ENCODE measurements at regions of chr4 and their contacts with region 1.

Region 1: DNA sequence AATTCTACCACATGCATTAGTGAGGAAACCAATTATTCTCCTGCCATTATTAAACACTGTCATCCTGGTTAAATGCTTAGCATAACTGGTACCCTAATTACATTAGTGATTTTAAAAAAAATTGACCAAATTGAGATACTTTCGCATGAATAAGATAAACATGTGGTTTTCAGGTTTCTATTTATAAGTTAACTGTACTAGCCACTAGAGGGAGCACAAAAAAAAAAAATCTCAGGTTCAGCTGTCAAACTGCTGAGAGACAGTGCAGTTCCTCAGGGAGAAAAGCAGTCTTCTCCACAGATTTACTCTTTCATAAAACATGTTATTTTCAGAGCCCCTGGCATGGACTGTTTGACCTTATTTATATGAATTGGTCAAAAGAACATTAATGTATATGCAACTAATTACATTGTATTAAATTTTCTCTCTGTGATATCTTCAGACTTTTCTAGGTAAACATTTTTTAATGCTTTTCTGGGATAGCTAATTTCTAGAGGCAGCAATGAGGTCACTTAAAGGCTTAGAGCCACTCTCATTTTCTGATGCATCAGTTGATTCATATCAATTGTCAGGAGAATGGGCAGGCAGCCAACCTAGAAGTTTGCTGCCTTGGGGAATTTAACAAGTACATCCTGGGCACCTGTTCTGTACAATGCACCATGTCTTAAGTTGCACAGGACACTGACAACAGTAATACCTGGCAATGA is 167.5 kb downstream of the CDS1 start:
- DNase-seq: peak; percentile 3
- H3K4me3 ChIP-seq: no peak overlapping the region
- CTCF ChIP-seq: peak; percentile 33

Region 2: GRCh38 chr4:84503495-84504437 is 246.6 kb before region 1 on chr4:
- CTCF ChIA-PET with region 1: no interaction called
- POLR2A ChIA-PET with region 1: no interaction called
- DNase-seq: peak; percentile 10
- H3K4me3 ChIP-seq: no peak overlapping the region
- CTCF ChIP-seq: peak; percentile 69

Region 3: DNA sequence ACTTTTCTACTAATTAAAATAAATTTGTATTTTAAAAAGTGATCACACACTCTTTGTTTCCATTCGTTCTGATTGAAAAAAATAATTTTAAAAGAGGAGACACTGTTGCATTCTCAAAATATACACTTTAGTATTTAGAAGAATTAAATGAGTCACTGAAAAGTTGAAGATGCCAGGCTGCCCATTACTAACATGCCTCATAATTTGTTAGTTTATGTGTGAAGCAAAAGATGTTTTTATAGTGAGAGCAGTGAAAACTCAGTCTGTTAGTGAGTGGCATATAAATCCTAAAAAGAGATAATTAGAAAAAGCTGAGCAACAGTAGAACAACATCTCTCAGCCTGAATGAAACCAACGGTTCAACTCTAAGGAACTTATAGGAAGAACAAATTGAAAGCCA is 24.1 kb before region 1 on chr4:
- CTCF ChIA-PET with region 1: interaction called, 20 read pairs
- POLR2A ChIA-PET with region 1: no interaction called
- DNase-seq: no peak
- H3K4me3 ChIP-seq: no peak overlapping the region
- CTCF ChIP-seq: no peak

Region 4: GRCh38 chr4:84733343-84734033 is 16.9 kb before region 1 on chr4:
- CTCF ChIA-PET with region 1: interaction called, 41 read pairs
- POLR2A ChIA-PET with region 1: no interaction called
- DNase-seq: no peak
- H3K4me3 ChIP-seq: no peak overlapping the region
- CTCF ChIP-seq: no peak

Region 5: DNA sequence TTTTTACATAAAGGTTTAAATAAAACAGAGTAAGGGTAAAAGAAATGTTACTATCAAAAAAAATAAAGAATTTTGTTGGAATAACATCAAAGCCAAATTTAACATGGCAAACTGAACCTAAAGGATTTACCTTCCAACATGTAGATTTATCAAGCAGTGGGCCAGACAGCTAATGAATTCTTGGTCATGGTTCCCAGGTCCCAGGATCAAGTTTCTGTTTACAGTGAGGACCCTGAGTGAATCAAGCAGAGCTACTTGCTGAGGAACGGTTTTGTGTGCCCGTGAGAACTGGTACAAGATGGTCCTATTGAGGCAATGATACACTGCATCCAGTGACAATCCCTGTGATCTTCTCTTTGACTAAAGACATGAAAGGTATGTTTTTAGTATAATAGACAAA is 10.3 kb before region 1 on chr4:
- CTCF ChIA-PET with region 1: interaction called, 41 read pairs
- POLR2A ChIA-PET with region 1: no interaction called
- DNase-seq: no peak
- H3K4me3 ChIP-seq: no peak overlapping the region
- CTCF ChIP-seq: no peak

Region 6: DNA sequence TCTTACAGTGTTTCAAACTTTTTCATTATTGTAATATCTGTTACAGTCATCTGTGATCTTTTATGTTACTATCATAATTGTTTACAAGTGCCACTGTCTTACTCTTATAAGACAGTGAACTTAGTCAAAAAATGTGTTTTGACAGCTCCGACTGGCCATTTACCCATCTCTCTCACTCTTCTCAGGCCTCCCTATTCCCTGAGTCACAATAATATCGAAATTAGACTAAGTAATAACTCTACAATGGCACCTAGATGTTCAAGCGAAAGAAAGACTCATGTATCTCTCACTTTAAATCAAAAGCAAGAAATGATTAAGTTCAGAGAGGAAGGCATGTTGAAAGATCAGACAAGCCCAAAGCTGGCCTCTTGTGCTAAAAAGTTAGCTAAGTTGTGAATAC is 16.8 kb after region 1 on chr4:
- CTCF ChIA-PET with region 1: interaction called, 28 read pairs
- POLR2A ChIA-PET with region 1: no interaction called
- DNase-seq: no peak
- H3K4me3 ChIP-seq: no peak overlapping the region
- CTCF ChIP-seq: no peak

Region 7: DNA sequence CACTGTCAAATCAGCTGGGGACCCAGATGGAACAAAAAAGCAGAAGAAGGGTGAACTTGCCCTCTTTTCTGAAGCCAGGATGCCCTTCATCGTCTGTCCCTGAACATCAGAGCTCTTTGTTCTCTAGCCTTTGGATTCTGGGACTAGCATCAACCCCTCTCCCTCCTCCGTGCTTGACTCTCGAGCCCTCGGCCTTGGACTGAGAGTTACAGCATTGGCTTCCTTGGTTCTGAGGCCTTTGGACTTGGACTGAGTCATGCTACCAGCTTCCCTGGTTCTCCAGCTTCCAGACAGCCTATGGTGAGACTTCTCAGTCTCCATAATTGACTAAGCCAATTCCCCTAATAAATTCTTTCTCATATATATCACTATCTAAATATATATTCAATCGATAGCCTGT is 177.7 kb after region 1 on chr4:
- CTCF ChIA-PET with region 1: no interaction called
- POLR2A ChIA-PET with region 1: no interaction called
- DNase-seq: no peak
- H3K4me3 ChIP-seq: no peak overlapping the region
- CTCF ChIP-seq: no peak

Region 8: DNA sequence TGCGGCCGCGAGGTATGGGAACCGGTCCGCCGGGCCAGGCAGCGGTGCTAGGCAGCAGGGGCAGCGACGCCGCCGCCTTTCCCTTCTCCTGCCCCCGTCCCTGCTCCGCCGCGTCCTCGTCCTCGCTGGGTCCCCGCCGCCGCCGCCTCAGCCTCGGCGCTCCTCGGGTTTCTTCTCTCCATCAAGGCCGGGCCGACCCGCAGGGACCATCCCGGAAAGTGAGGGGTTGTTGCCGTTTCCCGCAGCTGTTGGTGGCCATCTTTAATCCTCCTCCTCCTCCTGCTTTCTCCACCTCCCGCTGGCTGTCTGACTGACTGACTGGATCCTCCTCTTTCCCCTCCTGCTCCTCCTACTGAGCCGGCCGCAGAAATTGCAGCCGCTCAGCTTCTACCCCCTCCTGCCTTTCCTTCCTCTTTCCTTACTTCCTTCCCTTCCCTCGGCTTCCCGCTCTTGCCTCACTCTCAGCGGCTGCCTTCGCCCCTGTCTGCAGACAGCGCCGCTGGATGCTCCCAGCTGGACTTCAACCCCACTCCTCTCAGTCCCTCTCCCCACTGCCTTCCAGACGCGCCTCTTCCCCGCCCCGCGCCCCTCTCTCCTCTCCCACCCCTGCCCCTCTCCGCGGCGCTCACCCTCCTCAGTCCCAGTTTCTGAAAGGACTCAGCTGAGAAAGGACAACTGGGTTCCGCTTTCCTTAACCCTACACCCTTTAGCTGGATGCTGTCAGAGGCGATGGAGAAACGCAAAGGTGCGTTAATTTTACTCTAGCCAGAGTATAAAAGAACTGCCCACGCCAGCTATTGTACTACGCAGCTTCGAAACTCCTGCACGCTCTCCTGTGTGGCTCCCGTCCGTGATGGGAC is 216.2 kb after region 1 on chr4 and contains the start of gene WDFY3:
- CTCF ChIA-PET with region 1: interaction called, 141 read pairs
- POLR2A ChIA-PET with region 1: interaction called, 3 read pairs
- DNase-seq: no peak
- H3K4me3 ChIP-seq: peak within 1 kb of the TSS; percentile 76
- CTCF ChIP-seq: peak; percentile 6

Region 9: DNA sequence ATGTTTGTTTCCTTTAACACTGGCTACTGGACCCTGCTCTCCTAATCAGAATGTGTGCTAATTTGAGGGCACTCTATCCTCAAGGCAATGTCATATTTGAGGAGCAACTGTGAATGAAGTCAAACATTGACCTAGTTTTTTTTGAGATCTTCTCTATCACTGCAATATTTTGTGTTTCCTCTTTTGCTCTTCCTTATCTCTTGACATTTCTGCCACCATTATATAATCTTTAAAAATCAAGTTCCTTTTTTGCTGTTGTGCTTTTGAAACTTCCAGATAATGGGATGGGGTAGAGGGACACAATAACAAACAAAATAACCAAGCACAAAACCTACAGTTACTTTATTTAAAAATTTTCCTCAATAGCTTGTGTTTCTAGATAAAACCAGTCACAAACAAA is 223.4 kb after region 1 on chr4:
- CTCF ChIA-PET with region 1: interaction called, 141 read pairs
- POLR2A ChIA-PET with region 1: no interaction called
- DNase-seq: no peak
- H3K4me3 ChIP-seq: no peak overlapping the region
- CTCF ChIP-seq: no peak